ENCODE measurements at regions of chr11 and their contacts with region 1.

Region 1: GRCh38 chr11:63567044-63567840 is 4.1 kb upstream of the PLAAT2 start:
- DNase-seq: peak; percentile 75
- H3K4me3 Mint-ChIP-seq: peak overlapping the region; percentile 52
- H3K27ac Mint-ChIP-seq: peak overlapping the region; percentile 86
- H3K4me1 Mint-ChIP-seq: peaks cover 53% of the 10 kb centered on the region
- H3K27me3 Mint-ChIP-seq: no peaks in the 10 kb centered on the region

Region 2: DNA sequence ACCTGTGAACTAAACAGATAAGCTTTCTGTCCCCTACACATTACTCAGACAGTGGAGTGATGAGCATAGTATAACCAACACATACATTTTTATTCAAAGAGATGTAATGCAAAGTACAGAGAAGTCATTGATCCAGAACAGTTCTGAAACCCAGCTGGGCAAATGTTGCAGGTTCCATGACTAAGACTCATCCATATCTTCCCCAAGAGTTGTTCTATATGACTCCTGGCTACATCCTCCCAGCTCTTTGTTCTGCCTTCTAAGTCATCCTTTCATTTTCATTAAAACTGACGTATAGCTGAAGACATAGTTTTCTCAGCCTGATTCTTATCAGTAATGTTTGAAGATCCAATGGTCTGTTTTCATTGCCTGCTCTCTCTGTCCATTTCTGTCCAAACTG is 123.5 kb before region 1 on chr11:
- CTCF ChIA-PET with region 1: no interaction called
- POLR2A ChIA-PET with region 1: interaction called, 7 read pairs
- intact Hi-C with region 1: loop called (anchors 1 kb)
- DNase-seq: peak; percentile 55
- H3K4me3 Mint-ChIP-seq: no peak overlapping the region
- H3K27ac Mint-ChIP-seq: peak overlapping the region; percentile 69
- H3K4me1 Mint-ChIP-seq: peaks cover 44% of the 10 kb centered on the region
- H3K27me3 Mint-ChIP-seq: peaks cover 4% of the 10 kb centered on the region

Region 3: DNA sequence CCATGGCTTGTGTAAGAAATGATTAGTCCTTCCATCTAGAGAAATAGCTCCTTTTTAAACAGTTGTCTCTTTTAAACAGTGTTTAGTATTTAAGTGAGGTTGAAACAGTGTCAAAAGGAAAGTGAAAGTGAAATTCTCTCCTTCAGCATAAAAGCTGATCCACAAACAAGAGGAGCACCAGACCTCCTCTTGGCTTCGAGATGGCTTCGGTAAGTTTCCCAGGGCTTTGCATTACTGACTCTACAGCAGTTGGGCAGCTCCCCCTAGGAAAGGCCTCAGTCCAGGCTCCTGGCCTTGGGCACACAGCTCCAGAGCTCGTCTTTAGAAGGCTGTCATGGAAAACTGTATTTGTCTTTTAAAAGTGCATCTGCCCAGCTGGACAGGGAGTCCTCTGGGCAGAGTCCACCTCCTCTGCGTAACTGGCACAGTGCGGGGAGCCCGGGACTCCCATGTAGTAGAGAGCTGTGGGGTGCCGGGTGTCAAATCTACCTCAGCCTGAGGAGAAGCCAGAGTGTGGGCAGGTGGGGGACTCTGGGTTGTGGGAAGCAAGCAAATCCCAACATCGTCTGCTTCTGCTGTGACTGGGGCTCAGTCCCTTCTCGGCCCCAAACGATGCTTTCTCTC is 30.5 kb before region 1 on chr11 and contains the start of gene PLAAT4:
- CTCF ChIA-PET with region 1: interaction called, 8 read pairs
- POLR2A ChIA-PET with region 1: interaction called, 22 read pairs
- intact Hi-C with region 1: loop called (anchors 1 kb)
- DNase-seq: peak; percentile 44
- H3K4me3 Mint-ChIP-seq: peak within 1 kb of the TSS; percentile 81
- H3K27ac Mint-ChIP-seq: peak within 1 kb of the TSS; percentile 84
- H3K4me1 Mint-ChIP-seq: peaks cover 82% of the 10 kb centered on the region
- H3K27me3 Mint-ChIP-seq: no peaks in the 10 kb centered on the region
- total RNA-seq, gene PLAAT4: 35.7 to 36.3 TPM

Region 4: DNA sequence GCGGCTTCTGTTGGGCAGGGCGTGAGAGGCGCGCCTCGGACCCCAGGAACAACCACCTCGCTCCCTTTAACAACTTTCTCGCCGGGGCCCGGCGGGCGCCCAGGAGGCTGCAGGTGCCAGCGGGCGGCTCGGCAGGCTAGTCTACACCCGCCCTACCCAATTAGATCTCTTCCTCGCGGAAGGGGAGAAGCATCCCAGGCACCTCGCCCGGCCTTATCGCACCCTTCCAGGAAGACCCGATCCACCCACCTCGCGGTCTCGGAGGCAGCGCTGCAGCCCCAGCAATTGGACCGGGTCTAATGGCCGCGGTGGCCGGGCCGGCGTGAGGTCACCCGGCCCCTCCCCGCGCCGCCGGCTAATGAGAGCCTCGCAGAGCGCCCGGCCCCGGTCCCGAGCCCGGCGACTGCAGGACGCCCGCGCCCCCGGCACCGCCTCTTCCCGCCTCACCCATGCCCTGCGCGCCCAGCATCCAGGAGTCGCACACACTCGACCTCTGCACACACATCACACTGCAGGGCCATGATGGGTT is 47.0 kb after region 1 on chr11 and contains the start of gene PLAAT3:
- CTCF ChIA-PET with region 1: no interaction called
- POLR2A ChIA-PET with region 1: no interaction called
- intact Hi-C with region 1: loop called (anchors 1 kb)
- DNase-seq: peak; percentile 55
- H3K4me3 Mint-ChIP-seq: peak within 1 kb of the TSS; percentile 74
- H3K27ac Mint-ChIP-seq: no peak within 1 kb of the TSS
- H3K4me1 Mint-ChIP-seq: peaks cover 17% of the 10 kb centered on the region
- H3K27me3 Mint-ChIP-seq: no peaks in the 10 kb centered on the region
- total RNA-seq, gene PLAAT3: 10.3 to 10.4 TPM

Region 5: GRCh38 chr11:63974259-63975143 is 407.3 kb after region 1 on chr11 and contains the start of gene COX8A:
- CTCF ChIA-PET with region 1: no interaction called
- POLR2A ChIA-PET with region 1: no interaction called
- intact Hi-C with region 1: loop called (anchors 1 kb)
- DNase-seq: peak; percentile 98
- H3K4me3 Mint-ChIP-seq: peak within 1 kb of the TSS; percentile 100
- H3K27ac Mint-ChIP-seq: peak within 1 kb of the TSS; percentile 98
- H3K4me1 Mint-ChIP-seq: peaks cover 21% of the 10 kb centered on the region
- H3K27me3 Mint-ChIP-seq: no peaks in the 10 kb centered on the region
- total RNA-seq, gene COX8A: 559 to 581 TPM

Region 6: DNA sequence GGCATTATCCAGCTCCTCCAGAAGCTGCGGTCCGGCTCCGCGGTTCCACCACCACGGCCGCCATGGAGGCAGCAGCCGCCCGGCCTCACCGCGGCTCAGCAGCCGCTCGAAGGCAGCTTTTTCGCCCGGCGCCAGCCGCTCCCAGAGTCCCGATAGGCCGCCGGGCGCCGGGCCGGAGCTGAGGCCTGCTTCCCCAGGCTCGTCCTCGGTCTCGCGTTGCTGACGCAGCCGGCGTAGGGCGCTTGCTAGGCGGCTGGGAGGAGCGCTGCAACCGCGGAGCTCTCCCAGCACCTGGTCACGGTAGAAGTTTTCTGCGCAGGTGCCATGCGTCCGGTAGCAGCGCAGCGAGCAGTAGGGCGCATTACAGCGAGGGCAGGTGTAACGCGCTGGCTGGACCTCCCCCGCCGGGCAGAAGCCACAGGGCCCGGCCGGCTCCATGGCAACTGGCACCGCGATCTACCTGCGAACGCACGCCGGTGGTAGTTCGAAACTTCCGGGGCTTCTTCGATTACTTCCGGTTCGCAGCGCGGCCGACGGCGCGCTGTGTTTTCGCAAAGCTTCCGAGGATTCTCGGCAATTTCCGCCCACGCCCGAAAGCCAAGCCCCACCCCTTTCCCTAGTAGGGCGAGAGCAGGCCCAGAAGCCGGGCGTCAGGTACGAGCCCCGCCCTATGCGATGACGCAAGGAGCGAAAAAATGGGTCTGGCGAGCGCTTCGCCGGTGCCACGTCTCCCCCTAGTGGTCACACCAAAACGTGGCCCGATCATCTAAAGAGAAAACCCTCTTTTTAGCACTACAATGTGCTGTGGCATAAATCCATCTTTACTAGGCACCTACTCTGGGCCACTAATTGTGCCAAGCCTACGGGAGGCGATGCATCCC is 1550.2 kb after region 1 on chr11 and contains the start of gene ZNHIT2:
- CTCF ChIA-PET with region 1: no interaction called
- POLR2A ChIA-PET with region 1: no interaction called
- intact Hi-C with region 1: no loop called
- DNase-seq: peak; percentile 100
- H3K4me3 Mint-ChIP-seq: peak within 1 kb of the TSS; percentile 86
- H3K27ac Mint-ChIP-seq: peak within 1 kb of the TSS; percentile 95
- H3K4me1 Mint-ChIP-seq: peaks cover 68% of the 10 kb centered on the region
- H3K27me3 Mint-ChIP-seq: no peaks in the 10 kb centered on the region
- total RNA-seq, gene ZNHIT2: 9.3 to 9.7 TPM

Measured in activated CD4-positive, alpha-beta memory T cell treated with anti-CD3 and anti-CD28 coated beads for 36 hours (primary cell).